ENCODE measurements at regions of chr2 and their contacts with region 1.

Region 1: GRCh38 chr2:44955593-44956392 is 14.3 kb downstream of the SIX3 start:
- DNase-seq: peak; percentile 75
- H3K4me3 ChIP-seq: peak overlapping the region in 2 of 4 donors; percentile 14 to 19
- H3K27ac ChIP-seq: no peak overlapping the region
- H3K4me1 ChIP-seq: peaks cover 0 to 39% (median 33%) of the 10 kb centered on the region in 4 donors
- H3K27me3 ChIP-seq: peaks cover 19 to 77% (median 48%) of the 10 kb centered on the region in 3 donors
- CTCF ChIP-seq: peak; percentile 71 to 89 (median 74)
- EP300 ChIP-seq: no peak
- POLR2A ChIP-seq: no peak

Region 2: DNA sequence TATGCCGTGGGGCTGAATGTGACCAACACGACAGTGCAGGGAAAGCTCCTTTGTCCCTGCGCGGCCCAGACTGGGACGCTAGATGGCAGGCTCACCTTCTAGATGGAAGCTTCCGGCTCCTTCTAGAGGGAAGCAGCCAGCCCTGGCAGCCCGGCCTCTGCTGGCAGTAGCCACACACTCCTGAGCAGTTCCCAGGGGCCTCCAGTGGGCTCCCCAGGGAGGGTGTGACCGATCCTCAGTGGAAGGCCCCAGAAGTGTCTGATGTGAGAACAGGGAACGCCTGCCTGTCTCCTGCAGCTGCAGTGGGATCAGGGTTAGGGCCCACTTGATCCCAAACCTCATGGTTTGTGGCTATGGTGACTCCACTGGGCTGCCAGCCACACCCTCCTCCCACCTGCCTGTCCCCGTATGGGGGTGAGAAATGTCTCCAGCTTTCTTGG is 911.5 kb before region 1 on chr2:
- intact Hi-C with region 1: loop called (anchors 2 kb)
- DNase-seq: peak; percentile 87
- H3K4me3 ChIP-seq: no peak overlapping the region
- H3K27ac ChIP-seq: no peak overlapping the region
- H3K4me1 ChIP-seq: peaks cover 0 to 6% (median 0%) of the 10 kb centered on the region in 4 donors
- H3K27me3 ChIP-seq: no peaks in the 10 kb centered on the region
- CTCF ChIP-seq: peak; percentile 47 to 80 (median 70)
- EP300 ChIP-seq: no peak
- POLR2A ChIP-seq: no peak

Region 3: GRCh38 chr2:44244129-44244871 is 711.5 kb before region 1 on chr2:
- intact Hi-C with region 1: loop called (anchors 10 kb)
- DNase-seq: peak; percentile 72
- H3K4me3 ChIP-seq: peak overlapping the region; percentile 12 to 44 (median 31)
- H3K27ac ChIP-seq: peak overlapping the region in 1 of 4 donors; percentile 22
- H3K4me1 ChIP-seq: peaks cover 0 to 9% (median 5%) of the 10 kb centered on the region in 4 donors
- H3K27me3 ChIP-seq: no peaks in the 10 kb centered on the region
- CTCF ChIP-seq: peak in 3 of 4 experiments; percentile 26 to 59 (median 29)
- EP300 ChIP-seq: no peak
- POLR2A ChIP-seq: no peak

Region 4: GRCh38 chr2:44392338-44392943 is 563.4 kb before region 1 on chr2:
- intact Hi-C with region 1: loop called (anchors 5 kb)
- DNase-seq: no peak
- H3K4me3 ChIP-seq: no peak overlapping the region
- H3K27ac ChIP-seq: no peak overlapping the region
- H3K4me1 ChIP-seq: no peaks in the 10 kb centered on the region
- H3K27me3 ChIP-seq: no peaks in the 10 kb centered on the region
- CTCF ChIP-seq: peak in 2 of 4 experiments; percentile 16 to 44
- EP300 ChIP-seq: no peak
- POLR2A ChIP-seq: no peak

Region 5: GRCh38 chr2:44479122-44479887 is 476.5 kb before region 1 on chr2:
- intact Hi-C with region 1: loop called (anchors 1 kb)
- DNase-seq: no peak
- H3K4me3 ChIP-seq: no peak overlapping the region
- H3K27ac ChIP-seq: no peak overlapping the region
- H3K4me1 ChIP-seq: no peaks in the 10 kb centered on the region
- H3K27me3 ChIP-seq: no peaks in the 10 kb centered on the region
- CTCF ChIP-seq: peak; percentile 87 to 99 (median 96)
- EP300 ChIP-seq: no peak
- POLR2A ChIP-seq: no peak